ENCODE measurements at regions of chr2 and their contacts with region 1.

Region 1: GRCh38 chr2:233061591-233062450 is 1.7 kb downstream of the INPP5D start:
- DNase-seq: peak; percentile 53
- H3K4me3 Mint-ChIP-seq: peak overlapping the region; percentile 98
- H3K27ac Mint-ChIP-seq: peak overlapping the region; percentile 85
- H3K4me1 Mint-ChIP-seq: peaks cover 52% of the 10 kb centered on the region
- H3K27me3 Mint-ChIP-seq: no peaks in the 10 kb centered on the region

Region 2: DNA sequence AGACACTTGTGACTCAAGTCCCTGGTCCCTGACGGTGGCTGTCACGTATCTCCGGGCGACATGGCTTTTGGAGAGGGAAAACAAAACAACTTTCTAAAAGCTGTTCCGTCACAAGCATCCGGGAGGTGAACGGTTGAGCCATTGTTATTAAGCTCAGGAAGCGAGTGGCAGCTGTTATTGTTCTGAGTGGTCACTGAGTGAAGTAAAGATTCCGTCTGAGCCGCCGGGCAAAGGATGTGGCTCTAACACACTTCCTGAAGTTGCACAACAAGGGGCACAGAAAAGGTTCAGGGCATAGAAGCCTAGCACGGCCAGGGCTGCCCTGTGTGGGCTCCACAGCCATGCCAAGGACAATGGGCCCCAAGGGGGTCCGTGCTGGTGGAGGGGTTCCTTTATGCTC is 22.7 kb after region 1 on chr2:
- CTCF ChIA-PET with region 1: interaction called, 55 read pairs
- DNase-seq: peak; percentile 71
- H3K4me3 Mint-ChIP-seq: peak overlapping the region; percentile 69
- H3K27ac Mint-ChIP-seq: peak overlapping the region; percentile 92
- H3K4me1 Mint-ChIP-seq: peaks cover 81% of the 10 kb centered on the region
- H3K27me3 Mint-ChIP-seq: no peaks in the 10 kb centered on the region

Region 3: GRCh38 chr2:233240897-233241296 is 179.1 kb after region 1 on chr2:
- CTCF ChIA-PET with region 1: no interaction called
- DNase-seq: peak; percentile 56
- H3K4me3 Mint-ChIP-seq: peak overlapping the region; percentile 42
- H3K27ac Mint-ChIP-seq: peak overlapping the region; percentile 86
- H3K4me1 Mint-ChIP-seq: peaks cover 73% of the 10 kb centered on the region
- H3K27me3 Mint-ChIP-seq: no peaks in the 10 kb centered on the region

Region 4: GRCh38 chr2:233251306-233252116 is 189.7 kb after region 1 on chr2 and contains the start of gene ATG16L1:
- CTCF ChIA-PET with region 1: interaction called, 12 read pairs
- DNase-seq: peak; percentile 97
- H3K4me3 Mint-ChIP-seq: peak within 1 kb of the TSS; percentile 86
- H3K27ac Mint-ChIP-seq: peak within 1 kb of the TSS; percentile 96
- H3K4me1 Mint-ChIP-seq: peaks cover 76% of the 10 kb centered on the region
- H3K27me3 Mint-ChIP-seq: no peaks in the 10 kb centered on the region

Measured in activated naive CD4-positive, alpha-beta T cell treated with anti-CD3 and anti-CD28 coated beads, Interleukin-2, amount 10 ng/mL, durations not matched to agents 7 days and 5 days (primary cell).